Caco-2 (cell line): ENCODE measurements at regions of chr5 and their contacts with region 1.

Region 1: DNA sequence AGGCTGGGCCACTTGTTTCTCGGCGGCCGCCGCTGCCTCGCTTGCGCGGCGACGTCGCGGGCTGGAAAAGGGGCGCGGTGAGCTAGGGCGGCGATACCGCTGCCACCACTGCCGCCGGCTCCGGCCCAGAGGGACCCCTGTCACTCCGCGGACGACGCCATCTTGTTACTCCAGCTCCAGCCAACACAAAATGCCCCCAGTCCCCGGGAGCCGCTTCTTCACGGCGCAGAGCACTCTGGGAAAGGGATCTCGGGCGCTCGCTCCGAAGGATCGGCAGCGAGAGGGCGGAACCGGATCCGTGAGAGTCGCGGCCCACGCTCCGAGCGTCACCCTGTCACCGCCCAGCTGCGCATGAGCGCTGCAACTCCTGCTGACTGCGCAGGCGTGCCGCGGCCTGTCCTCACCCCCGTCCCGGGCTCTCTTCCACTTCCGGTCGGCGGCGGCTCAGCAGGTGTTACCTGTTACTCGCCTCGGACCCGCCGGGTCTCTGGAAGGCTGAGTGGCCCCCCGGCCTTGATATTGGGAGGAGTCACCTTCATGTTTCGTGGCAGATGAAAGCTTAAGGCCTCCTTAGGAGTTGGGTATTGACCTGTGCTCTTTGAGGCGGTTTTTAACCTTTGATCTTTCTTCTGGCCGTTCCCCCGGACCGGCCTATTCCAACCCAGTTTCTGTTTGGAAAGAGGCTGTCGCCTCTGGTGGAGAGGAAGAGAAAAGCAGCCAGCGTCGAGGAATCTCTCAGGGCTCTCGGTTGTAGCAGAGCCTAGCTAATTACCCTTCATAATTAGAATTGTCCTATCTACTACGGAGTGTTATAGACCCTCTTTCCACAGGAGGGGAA is at the start of gene CSNK1A1:
- DNase-seq: peak; percentile 99
- H3K4me3 ChIP-seq: peak within 1 kb of the TSS; percentile 76
- H3K4me3 Mint-ChIP-seq: peak within 1 kb of the TSS; percentile 99
- H3K27ac Mint-ChIP-seq: peak within 1 kb of the TSS; percentile 99
- H3K4me1 ChIP-seq: peaks cover 30% of the 10 kb centered on the region
- H3K4me1 Mint-ChIP-seq: peaks cover 16% of the 10 kb centered on the region
- H3K27me3 ChIP-seq: no peaks in the 10 kb centered on the region
- H3K27me3 Mint-ChIP-seq: no peaks in the 10 kb centered on the region
- CTCF ChIP-seq: peak; percentile 80
- total RNA-seq, gene CSNK1A1: 252 and 264 TPM in 2 replicates

Region 2: GRCh38 chr5:149452007-149452664 is 99.3 kb before region 1 on chr5:
- CTCF ChIA-PET with region 1: interaction called, 10 read pairs
- POLR2A ChIA-PET with region 1: interaction called, 16 read pairs
- intact Hi-C with region 1: loop called (anchors 1 kb)
- DNase-seq: peak; percentile 89 to 97
- H3K4me3 ChIP-seq: no peak overlapping the region
- H3K4me3 Mint-ChIP-seq: peak overlapping the region; percentile 57
- H3K27ac Mint-ChIP-seq: peak overlapping the region; percentile 97
- H3K4me1 ChIP-seq: peaks cover 79% of the 10 kb centered on the region
- H3K4me1 Mint-ChIP-seq: peaks cover 56% of the 10 kb centered on the region
- H3K27me3 ChIP-seq: no peaks in the 10 kb centered on the region
- H3K27me3 Mint-ChIP-seq: no peaks in the 10 kb centered on the region
- CTCF ChIP-seq: peak in 1 of 2 experiments; percentile 53

Region 3: GRCh38 chr5:149517461-149518122 is 33.8 kb before region 1 on chr5:
- CTCF ChIA-PET with region 1: interaction called, 4 read pairs
- POLR2A ChIA-PET with region 1: interaction called, 4 read pairs
- intact Hi-C with region 1: loop called (anchors 5 kb)
- DNase-seq: no peak
- H3K4me3 ChIP-seq: no peak overlapping the region
- H3K4me3 Mint-ChIP-seq: no peak overlapping the region
- H3K27ac Mint-ChIP-seq: no peak overlapping the region
- H3K4me1 ChIP-seq: no peaks in the 10 kb centered on the region
- H3K4me1 Mint-ChIP-seq: no peaks in the 10 kb centered on the region
- H3K27me3 ChIP-seq: no peaks in the 10 kb centered on the region
- H3K27me3 Mint-ChIP-seq: no peaks in the 10 kb centered on the region
- CTCF ChIP-seq: no peak

Region 4: GRCh38 chr5:149603210-149603609 is 51.8 kb after region 1 on chr5:
- CTCF ChIA-PET with region 1: interaction called, 3 read pairs
- POLR2A ChIA-PET with region 1: no interaction called
- intact Hi-C with region 1: loop called (anchors 1 kb)
- DNase-seq: no peak
- H3K4me3 ChIP-seq: no peak overlapping the region
- H3K4me3 Mint-ChIP-seq: peak overlapping the region; percentile 21
- H3K27ac Mint-ChIP-seq: peak overlapping the region; percentile 26
- H3K4me1 ChIP-seq: peaks cover 47% of the 10 kb centered on the region
- H3K4me1 Mint-ChIP-seq: peaks cover 37% of the 10 kb centered on the region
- H3K27me3 ChIP-seq: no peaks in the 10 kb centered on the region
- H3K27me3 Mint-ChIP-seq: no peaks in the 10 kb centered on the region
- CTCF ChIP-seq: no peak

Region 5: DNA sequence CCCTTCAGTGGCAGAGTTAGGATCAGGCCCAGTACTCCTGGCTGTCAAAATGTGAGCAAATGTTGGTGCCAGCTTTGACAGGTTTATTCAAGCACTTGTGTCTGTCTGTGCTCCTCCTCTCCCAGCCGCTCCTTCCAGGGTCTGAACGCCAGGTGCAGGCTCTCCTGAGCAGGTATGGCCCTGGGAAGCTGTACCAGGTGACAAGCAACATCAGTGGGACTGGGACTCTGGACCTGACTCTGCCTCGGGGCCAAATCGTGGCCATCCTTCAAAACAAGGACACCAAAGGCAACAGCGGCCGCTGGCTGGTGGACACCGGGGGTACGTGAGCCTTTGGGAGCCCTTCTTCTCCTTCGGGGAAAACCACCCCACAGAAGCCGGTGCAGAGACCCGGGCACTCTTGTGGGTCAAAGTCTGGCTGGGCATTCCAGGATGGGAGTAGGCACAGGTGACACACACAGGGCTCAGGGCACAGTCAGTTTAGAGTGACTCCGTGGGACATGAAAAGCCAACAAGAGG is 75.6 kb after region 1 on chr5:
- CTCF ChIA-PET with region 1: no interaction called
- POLR2A ChIA-PET with region 1: no interaction called
- intact Hi-C with region 1: no loop called
- DNase-seq: no peak
- H3K4me3 ChIP-seq: no peak overlapping the region
- H3K4me3 Mint-ChIP-seq: no peak overlapping the region
- H3K27ac Mint-ChIP-seq: no peak overlapping the region
- H3K4me1 ChIP-seq: no peaks in the 10 kb centered on the region
- H3K4me1 Mint-ChIP-seq: no peaks in the 10 kb centered on the region
- H3K27me3 ChIP-seq: no peaks in the 10 kb centered on the region
- H3K27me3 Mint-ChIP-seq: no peaks in the 10 kb centered on the region
- CTCF ChIP-seq: no peak

Region 6: GRCh38 chr5:149656576-149657182 is 105.3 kb after region 1 on chr5:
- CTCF ChIA-PET with region 1: no interaction called
- POLR2A ChIA-PET with region 1: no interaction called
- intact Hi-C with region 1: no loop called
- DNase-seq: peak; percentile 67 to 71
- H3K4me3 ChIP-seq: no peak overlapping the region
- H3K4me3 Mint-ChIP-seq: no peak overlapping the region
- H3K27ac Mint-ChIP-seq: no peak overlapping the region
- H3K4me1 ChIP-seq: no peaks in the 10 kb centered on the region
- H3K4me1 Mint-ChIP-seq: no peaks in the 10 kb centered on the region
- H3K27me3 ChIP-seq: no peaks in the 10 kb centered on the region
- H3K27me3 Mint-ChIP-seq: no peaks in the 10 kb centered on the region
- CTCF ChIP-seq: peak; percentile 82 to 85